ENCODE measurements at regions of chrX and their contacts with region 1.

Region 1: GRCh38 chrX:45830343-45830742 is 629.7 kb upstream of the DIPK2B start:
- DNase-seq: no peak
- ATAC-seq: no peak
- H3K4me3 ChIP-seq: no peak overlapping the region
- H3K27ac ChIP-seq: no peak overlapping the region
- H3K4me1 ChIP-seq: no peaks in the 10 kb centered on the region
- H3K27me3 ChIP-seq: peaks cover 5% of the 10 kb centered on the region
- CTCF ChIP-seq: no peak
- POLR2A ChIP-seq: no peak
- RAD21 ChIP-seq: no peak

Region 2: GRCh38 chrX:45022150-45022549 is 808.2 kb before region 1 on chrX:
- CTCF ChIA-PET with region 1: no interaction called
- POLR2A ChIA-PET with region 1: no interaction called
- dilution Hi-C with region 1: no loop called
- in situ Hi-C with region 1: no loop called
- intact Hi-C with region 1: no loop called
- DNase-seq: no peak
- ATAC-seq: no peak
- H3K4me3 ChIP-seq: no peak overlapping the region
- H3K27ac ChIP-seq: no peak overlapping the region
- H3K4me1 ChIP-seq: peaks cover 2% of the 10 kb centered on the region; the same call in 1 of the 2 replicates
- H3K27me3 ChIP-seq: no peaks in the 10 kb centered on the region
- CTCF ChIP-seq: no peak
- POLR2A ChIP-seq: no peak
- RAD21 ChIP-seq: no peak

Region 3: GRCh38 chrX:45515262-45516215 is 314.8 kb before region 1 on chrX:
- CTCF ChIA-PET with region 1: no interaction called
- POLR2A ChIA-PET with region 1: no interaction called
- dilution Hi-C with region 1: no loop called
- in situ Hi-C with region 1: no loop called
- intact Hi-C with region 1: no loop called
- DNase-seq: peak; percentile 92
- ATAC-seq: peak; percentile 71
- H3K4me3 ChIP-seq: peak overlapping the region; percentile 23; the same call in 1 of the 2 replicates
- H3K27ac ChIP-seq: peak overlapping the region; percentile 77
- H3K4me1 ChIP-seq: peaks cover 7% of the 10 kb centered on the region
- H3K27me3 ChIP-seq: peaks cover 2% of the 10 kb centered on the region
- CTCF ChIP-seq: peak; percentile 74
- POLR2A ChIP-seq: peak; percentile 49; the same call in 1 of the 2 replicates
- RAD21 ChIP-seq: peak; percentile 83

Region 4: GRCh38 chrX:45571453-45571852 is 258.9 kb before region 1 on chrX:
- CTCF ChIA-PET with region 1: no interaction called
- POLR2A ChIA-PET with region 1: no interaction called
- dilution Hi-C with region 1: no loop called
- in situ Hi-C with region 1: no loop called
- intact Hi-C with region 1: no loop called
- DNase-seq: no peak
- ATAC-seq: no peak
- H3K4me3 ChIP-seq: no peak overlapping the region
- H3K27ac ChIP-seq: no peak overlapping the region
- H3K4me1 ChIP-seq: no peaks in the 10 kb centered on the region
- H3K27me3 ChIP-seq: no peaks in the 10 kb centered on the region; the same call in none of the 2 replicates
- CTCF ChIP-seq: no peak
- POLR2A ChIP-seq: no peak
- RAD21 ChIP-seq: no peak

Region 5: GRCh38 chrX:45889471-45889870 is 59.1 kb after region 1 on chrX:
- CTCF ChIA-PET with region 1: no interaction called
- POLR2A ChIA-PET with region 1: no interaction called
- dilution Hi-C with region 1: no loop called
- in situ Hi-C with region 1: no loop called
- intact Hi-C with region 1: loop called (anchors 5 kb)
- DNase-seq: peak; percentile 6
- ATAC-seq: no peak
- H3K4me3 ChIP-seq: no peak overlapping the region
- H3K27ac ChIP-seq: no peak overlapping the region
- H3K4me1 ChIP-seq: no peaks in the 10 kb centered on the region
- H3K27me3 ChIP-seq: peaks cover 12% of the 10 kb centered on the region
- CTCF ChIP-seq: no peak
- POLR2A ChIP-seq: no peak
- RAD21 ChIP-seq: no peak

Region 6: GRCh38 chrX:46044486-46044885 is 214.1 kb after region 1 on chrX:
- CTCF ChIA-PET with region 1: no interaction called
- POLR2A ChIA-PET with region 1: no interaction called
- dilution Hi-C with region 1: no loop called
- in situ Hi-C with region 1: no loop called
- intact Hi-C with region 1: no loop called
- DNase-seq: no peak
- ATAC-seq: no peak
- H3K4me3 ChIP-seq: no peak overlapping the region
- H3K27ac ChIP-seq: no peak overlapping the region
- H3K4me1 ChIP-seq: no peaks in the 10 kb centered on the region
- H3K27me3 ChIP-seq: no peaks in the 10 kb centered on the region
- CTCF ChIP-seq: no peak
- POLR2A ChIP-seq: no peak
- RAD21 ChIP-seq: no peak

Measured in IMR-90 (cell line).